ENCODE measurements at regions of chr2 and their contacts with region 1.

Region 1: DNA sequence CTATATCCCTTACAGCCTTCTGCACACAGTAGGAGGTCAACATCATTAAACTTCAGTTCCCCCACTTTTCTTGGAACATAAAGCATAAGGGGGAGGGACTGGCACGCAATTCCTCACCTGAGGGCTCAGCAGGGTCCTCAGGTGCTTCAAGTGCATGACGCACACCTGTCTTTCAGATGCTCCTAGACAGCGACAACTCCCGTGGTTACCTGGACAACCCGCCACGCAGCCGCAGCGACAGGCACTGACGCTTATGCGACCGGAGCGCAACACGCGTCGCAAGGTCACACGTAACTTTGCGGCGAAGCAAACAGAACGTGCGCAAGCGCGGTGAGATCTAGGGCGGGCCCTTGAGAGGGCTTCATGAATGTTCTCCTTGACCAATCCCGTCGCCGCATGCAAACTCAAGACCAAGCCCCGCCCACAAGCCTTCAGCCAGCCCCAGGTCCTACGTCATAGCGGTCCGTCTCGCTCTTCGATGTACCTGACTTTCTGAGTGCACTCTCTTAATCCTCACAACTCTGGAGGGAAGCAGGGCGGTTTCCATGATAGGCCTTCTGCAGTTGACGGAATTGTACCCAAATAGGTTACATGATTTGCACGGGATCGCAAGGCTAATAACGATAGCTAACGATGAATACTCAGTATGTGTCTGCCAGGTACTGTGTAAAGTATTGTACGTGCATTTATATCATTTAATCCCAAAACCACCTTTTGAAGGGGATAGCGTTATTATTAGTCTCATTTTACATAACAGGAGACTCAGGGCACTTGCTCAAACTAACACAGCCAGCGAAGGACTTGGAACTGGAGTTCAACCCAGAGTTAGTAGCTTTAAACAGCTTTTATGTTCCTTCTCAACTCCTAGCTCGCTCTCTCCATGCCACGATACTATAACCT is at the start of gene IFT172:
- DNase-seq: peak; percentile 97 to 99
- H3K4me3 ChIP-seq: peak within 1 kb of the TSS; percentile 54 to 73
- H3K27ac ChIP-seq: peak within 1 kb of the TSS; percentile 69 to 77
- H3K4me1 ChIP-seq: peaks cover 0 to 14% of the 10 kb centered on the region in 2 donors
- H3K27me3 ChIP-seq: no peaks in the 10 kb centered on the region
- CTCF ChIP-seq: no peak
- total RNA-seq, gene IFT172: 204 TPM

Region 2: GRCh38 chr2:27133905-27134780 is 355.6 kb before region 1 on chr2 and contains the start of gene PREB:
- intact Hi-C with region 1: loop called (anchors 10 kb)
- DNase-seq: peak; percentile 77 to 98
- H3K4me3 ChIP-seq: peak within 1 kb of the TSS; percentile 89 to 96
- H3K27ac ChIP-seq: peak within 1 kb of the TSS; percentile 90 to 91
- H3K4me1 ChIP-seq: peaks cover 5 to 11% of the 10 kb centered on the region in 2 donors
- H3K27me3 ChIP-seq: no peaks in the 10 kb centered on the region
- CTCF ChIP-seq: peak in 1 of 3 experiments; percentile 11
- total RNA-seq, gene PREB: 116 TPM

Region 3: GRCh38 chr2:27347641-27348040 is 142.1 kb before region 1 on chr2:
- intact Hi-C with region 1: no loop called
- DNase-seq: no peak
- H3K4me3 ChIP-seq: no peak overlapping the region
- H3K27ac ChIP-seq: no peak overlapping the region
- H3K4me1 ChIP-seq: no peaks in the 10 kb centered on the region
- H3K27me3 ChIP-seq: no peaks in the 10 kb centered on the region
- CTCF ChIP-seq: no peak

Region 4: DNA sequence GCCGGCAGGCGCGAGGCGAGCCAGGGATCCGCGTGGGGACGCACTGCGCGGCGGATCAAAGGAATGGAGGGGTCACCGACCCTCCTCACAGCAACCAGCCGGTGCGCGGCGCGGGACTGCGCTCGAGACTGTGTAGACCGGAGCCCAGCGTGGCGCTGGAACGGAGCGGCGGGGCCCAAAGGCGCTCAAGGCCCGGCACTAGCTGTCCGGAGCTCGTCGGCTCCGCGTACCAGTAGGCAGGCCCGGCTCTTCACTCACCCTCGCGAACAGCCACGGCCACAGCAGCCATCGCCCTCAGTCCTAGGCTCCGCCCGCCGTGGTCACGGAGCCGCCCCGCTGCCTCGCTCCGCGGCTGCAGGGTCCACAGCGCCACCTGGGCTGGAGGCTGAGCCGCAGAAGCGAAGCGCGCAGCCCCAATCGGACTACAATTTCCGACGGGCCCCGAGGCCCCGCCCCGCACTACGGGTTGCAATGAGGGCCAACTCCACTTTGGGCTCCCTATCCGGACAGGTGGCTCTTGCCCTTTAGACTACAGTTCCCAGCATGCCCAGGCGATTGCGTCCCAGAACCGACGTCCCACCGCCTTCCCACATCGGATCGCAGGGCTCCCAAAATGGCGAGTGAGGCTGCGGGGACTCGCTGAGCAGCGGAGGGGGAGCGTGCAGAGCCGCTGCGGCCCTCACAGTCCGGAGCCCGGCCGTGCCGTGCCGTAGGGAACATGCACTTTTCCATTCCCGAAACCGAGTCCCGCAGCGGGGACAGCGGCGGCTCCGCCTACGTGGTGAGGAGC is 119.5 kb before region 1 on chr2 and contains the starts of genes EIF2B4 and SNX17:
- intact Hi-C with region 1: loop called (anchors 5 kb)
- DNase-seq: peak; percentile 97 to 100
- H3K4me3 ChIP-seq: peak within 1 kb of the TSS; percentile 70 to 84
- H3K27ac ChIP-seq: peak within 1 kb of the TSS; percentile 87 to 95
- H3K4me1 ChIP-seq: peaks cover 9 to 23% of the 10 kb centered on the region in 2 donors
- H3K27me3 ChIP-seq: no peaks in the 10 kb centered on the region
- CTCF ChIP-seq: peak; percentile 68 to 87 (median 83)
- total RNA-seq, gene EIF2B4: 34.8 TPM
- total RNA-seq, gene SNX17: 94.0 TPM

Region 5: DNA sequence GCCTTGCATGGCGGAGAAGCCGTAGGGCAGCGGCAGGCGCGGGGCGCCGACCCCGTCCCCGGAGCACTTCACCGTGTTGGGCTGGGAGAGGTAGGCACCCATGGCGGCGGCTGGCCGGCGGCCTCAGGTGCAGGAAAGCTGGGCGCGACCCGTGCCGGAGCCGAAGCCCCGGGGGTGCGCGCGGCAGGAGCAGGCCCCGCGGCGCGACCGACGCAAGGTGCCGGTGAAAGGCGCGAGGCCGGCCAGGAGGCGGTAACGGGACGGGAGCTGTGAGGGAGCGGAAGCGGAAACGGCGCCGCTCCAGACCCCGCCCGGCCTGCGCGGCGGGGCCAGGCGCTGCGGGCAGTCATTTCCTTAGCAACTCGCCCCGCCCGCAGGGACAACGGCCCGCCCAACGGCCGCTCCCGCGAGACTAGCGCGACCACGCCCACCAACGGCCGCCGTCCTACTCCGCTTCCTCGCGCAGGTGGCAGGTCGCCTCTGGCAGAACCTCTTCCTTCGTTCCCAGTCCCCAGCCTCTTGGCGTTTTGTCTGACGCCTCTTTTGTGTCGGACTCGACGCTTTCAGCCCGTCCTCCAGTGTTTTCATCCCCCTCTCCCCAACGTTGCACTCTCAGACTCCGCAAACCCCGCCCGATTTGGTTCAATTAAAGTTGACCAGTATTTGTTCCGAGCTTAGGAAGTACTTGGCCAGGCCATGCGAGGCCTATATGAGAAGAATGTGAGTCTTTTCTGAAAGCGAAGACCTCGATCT is 80.3 kb before region 1 on chr2 and contains the start of gene PPM1G:
- intact Hi-C with region 1: loop called (anchors 1 kb)
- DNase-seq: peak; percentile 56 to 95
- H3K4me3 ChIP-seq: peak within 1 kb of the TSS; percentile 96 to 97
- H3K27ac ChIP-seq: peak within 1 kb of the TSS; percentile 80 to 91
- H3K4me1 ChIP-seq: peaks cover 6 to 12% of the 10 kb centered on the region in 2 donors
- H3K27me3 ChIP-seq: no peaks in the 10 kb centered on the region
- CTCF ChIP-seq: no peak
- total RNA-seq, gene PPM1G: 24.7 TPM

Region 6: GRCh38 chr2:27471961-27472360 is 17.8 kb before region 1 on chr2:
- intact Hi-C with region 1: no loop called
- DNase-seq: no peak
- H3K4me3 ChIP-seq: no peak overlapping the region
- H3K27ac ChIP-seq: no peak overlapping the region
- H3K4me1 ChIP-seq: no peaks in the 10 kb centered on the region
- H3K27me3 ChIP-seq: no peaks in the 10 kb centered on the region
- CTCF ChIP-seq: no peak

Region 7: GRCh38 chr2:27582695-27583389 is 93.1 kb after region 1 on chr2 and contains the start of gene ZNF512:
- intact Hi-C with region 1: loop called (anchors 2 kb)
- DNase-seq: peak; percentile 74 to 96
- H3K4me3 ChIP-seq: peak within 1 kb of the TSS; percentile 72 to 75
- H3K27ac ChIP-seq: peak within 1 kb of the TSS; percentile 61 to 74
- H3K4me1 ChIP-seq: peaks cover 0 to 17% of the 10 kb centered on the region in 2 donors
- H3K27me3 ChIP-seq: no peaks in the 10 kb centered on the region
- CTCF ChIP-seq: no peak
- total RNA-seq, gene ZNF512: 64.8 TPM

Region 8: DNA sequence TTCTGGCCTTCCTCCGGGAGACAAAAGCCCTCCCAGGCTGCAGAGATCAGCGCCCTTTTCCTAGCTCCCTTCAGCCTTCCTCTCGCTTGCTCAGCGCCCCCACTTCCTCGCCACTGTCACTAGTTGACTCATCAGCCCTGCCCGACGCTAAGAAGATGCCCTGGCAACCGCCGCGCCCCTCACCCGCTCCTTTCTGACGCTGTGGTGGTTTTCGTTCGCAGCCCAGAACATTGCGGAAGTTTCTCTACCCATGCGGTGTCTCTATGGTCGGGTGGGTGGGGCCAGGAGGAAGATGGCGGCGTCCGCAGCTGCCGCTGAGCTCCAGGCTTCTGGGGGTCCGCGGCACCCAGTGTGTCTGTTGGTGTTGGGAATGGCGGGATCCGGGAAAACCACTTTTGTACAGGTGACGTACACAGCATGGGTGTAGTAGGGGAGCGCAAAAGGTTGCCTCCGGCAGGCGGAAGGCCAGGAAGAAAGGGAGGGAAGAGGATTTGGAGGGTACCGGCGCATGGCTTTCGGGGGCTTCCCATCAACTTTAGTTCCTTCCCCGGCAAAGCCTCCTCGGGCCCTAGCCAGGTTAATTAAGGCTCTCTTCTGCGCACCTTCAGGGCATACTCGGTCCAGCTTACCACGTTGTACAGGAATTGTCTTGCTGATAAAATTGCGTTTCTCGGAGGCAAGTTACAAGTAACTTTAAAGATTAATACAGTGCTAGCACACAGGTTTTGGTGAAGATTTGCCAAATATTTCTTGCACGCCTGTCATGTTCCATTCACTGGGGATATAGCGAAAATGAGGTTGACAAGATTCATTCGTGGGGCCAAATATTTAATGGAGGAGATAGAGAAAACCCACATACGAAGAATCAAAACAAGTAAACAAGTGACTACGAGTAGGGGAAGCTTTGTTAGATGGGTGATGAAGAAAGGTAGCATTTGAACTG is 139.3 kb after region 1 on chr2 and contains the starts of genes CCDC121 and GPN1:
- intact Hi-C with region 1: loop called (anchors 2 kb)
- DNase-seq: peak; percentile 77 to 94
- H3K4me3 ChIP-seq: peak within 1 kb of the TSS; percentile 66 to 71
- H3K27ac ChIP-seq: peak within 1 kb of the TSS; percentile 59 to 74
- H3K4me1 ChIP-seq: peaks cover 0 to 5% of the 10 kb centered on the region in 2 donors
- H3K27me3 ChIP-seq: no peaks in the 10 kb centered on the region
- CTCF ChIP-seq: no peak
- total RNA-seq, gene CCDC121: 8.0 TPM
- total RNA-seq, gene GPN1: 13.1 TPM